ENCODE measurements at regions of chr4 and their contacts with region 1.

Region 1: DNA sequence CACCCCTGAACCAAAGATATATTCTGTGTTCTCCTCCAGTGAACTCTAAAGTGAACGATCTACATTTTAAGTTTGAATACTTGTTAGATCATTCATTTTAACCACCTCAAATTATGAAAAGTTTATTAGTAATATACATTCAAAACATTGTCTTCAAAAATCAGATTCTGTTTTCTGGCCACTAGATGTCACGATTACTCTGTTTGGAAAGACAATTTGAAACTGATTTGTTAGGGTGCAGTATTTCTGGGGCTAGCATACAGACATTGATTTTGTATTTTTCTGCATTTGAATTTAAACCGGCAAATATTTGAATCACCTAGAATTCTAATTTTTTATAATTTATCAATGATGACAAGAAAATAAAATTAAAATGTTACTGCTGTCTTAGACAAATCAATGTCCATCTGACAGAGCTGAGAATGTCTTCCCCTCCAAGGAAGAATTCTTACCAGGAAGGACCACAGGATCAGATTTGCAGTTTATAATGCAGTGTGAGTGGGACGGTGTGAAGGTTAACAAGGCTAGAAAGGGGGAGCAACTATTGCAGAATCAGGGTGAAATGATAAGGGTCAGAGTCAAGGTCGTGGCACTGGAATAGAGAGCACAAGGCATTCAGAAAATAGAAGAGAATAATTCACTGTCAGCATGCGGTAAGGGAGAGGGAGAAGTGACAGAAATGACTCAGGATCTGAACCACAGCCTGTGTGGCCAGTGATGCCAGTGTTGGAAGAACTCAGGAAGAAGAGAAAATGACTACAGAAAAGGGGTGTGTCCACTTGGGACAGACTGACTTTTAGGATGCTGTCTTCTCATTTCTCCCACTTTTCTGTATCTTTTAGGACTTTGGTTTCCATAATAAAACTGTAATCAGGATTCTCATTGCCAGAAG is 91.6 kb downstream of the ANXA10 start:
- DNase-seq: peak in 2 of 9 experiments; percentile 24 to 36
- ATAC-seq: no peak
- H3K4me3 ChIP-seq: no peak overlapping the region
- H3K4me3 Mint-ChIP-seq: no peak overlapping the region
- H3K27ac ChIP-seq: no peak overlapping the region
- H3K27ac Mint-ChIP-seq: no peak overlapping the region
- H3K4me1 ChIP-seq: no peaks in the 10 kb centered on the region
- H3K4me1 Mint-ChIP-seq: no peaks in the 10 kb centered on the region
- H3K27me3 ChIP-seq: no peaks in the 10 kb centered on the region
- H3K27me3 Mint-ChIP-seq: no peaks in the 10 kb centered on the region
- CTCF ChIP-seq: peak; percentile 49

Region 2: GRCh38 chr4:167883266-167883665 is 300.7 kb before region 1 on chr4:
- CTCF ChIA-PET with region 1: no interaction called
- POLR2A ChIA-PET with region 1: no interaction called
- intact Hi-C with region 1: no loop called
- DNase-seq: no peak
- ATAC-seq: no peak
- H3K4me3 ChIP-seq: no peak overlapping the region
- H3K4me3 Mint-ChIP-seq: no peak overlapping the region
- H3K27ac ChIP-seq: no peak overlapping the region
- H3K27ac Mint-ChIP-seq: no peak overlapping the region
- H3K4me1 ChIP-seq: no peaks in the 10 kb centered on the region
- H3K4me1 Mint-ChIP-seq: no peaks in the 10 kb centered on the region
- H3K27me3 ChIP-seq: no peaks in the 10 kb centered on the region
- H3K27me3 Mint-ChIP-seq: no peaks in the 10 kb centered on the region
- CTCF ChIP-seq: no peak

Region 3: DNA sequence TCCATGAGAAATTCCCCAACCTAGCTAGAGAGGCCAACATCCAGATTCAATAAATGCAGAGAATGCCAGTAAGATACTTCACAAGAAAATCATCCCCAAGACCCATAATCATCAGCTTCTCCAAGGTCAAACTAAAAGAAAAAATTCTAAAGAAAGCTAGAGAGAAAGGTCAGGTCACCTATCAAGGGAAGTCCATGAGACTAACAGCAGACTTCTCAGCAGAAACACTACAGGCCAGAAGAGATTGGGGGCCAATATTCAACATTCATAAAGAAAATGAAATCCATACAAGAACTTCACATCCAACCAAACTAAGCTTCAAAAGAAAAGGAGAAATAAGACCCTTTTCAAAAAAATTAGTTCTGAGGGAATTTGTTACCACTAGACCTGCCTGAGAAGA is 210.4 kb before region 1 on chr4:
- CTCF ChIA-PET with region 1: no interaction called
- POLR2A ChIA-PET with region 1: no interaction called
- intact Hi-C with region 1: no loop called
- DNase-seq: no peak
- ATAC-seq: no peak
- H3K4me3 ChIP-seq: no peak overlapping the region
- H3K4me3 Mint-ChIP-seq: no peak overlapping the region
- H3K27ac ChIP-seq: no peak overlapping the region
- H3K27ac Mint-ChIP-seq: no peak overlapping the region
- H3K4me1 ChIP-seq: no peaks in the 10 kb centered on the region
- H3K4me1 Mint-ChIP-seq: no peaks in the 10 kb centered on the region
- H3K27me3 ChIP-seq: no peaks in the 10 kb centered on the region
- H3K27me3 Mint-ChIP-seq: no peaks in the 10 kb centered on the region
- CTCF ChIP-seq: no peak

Region 4: DNA sequence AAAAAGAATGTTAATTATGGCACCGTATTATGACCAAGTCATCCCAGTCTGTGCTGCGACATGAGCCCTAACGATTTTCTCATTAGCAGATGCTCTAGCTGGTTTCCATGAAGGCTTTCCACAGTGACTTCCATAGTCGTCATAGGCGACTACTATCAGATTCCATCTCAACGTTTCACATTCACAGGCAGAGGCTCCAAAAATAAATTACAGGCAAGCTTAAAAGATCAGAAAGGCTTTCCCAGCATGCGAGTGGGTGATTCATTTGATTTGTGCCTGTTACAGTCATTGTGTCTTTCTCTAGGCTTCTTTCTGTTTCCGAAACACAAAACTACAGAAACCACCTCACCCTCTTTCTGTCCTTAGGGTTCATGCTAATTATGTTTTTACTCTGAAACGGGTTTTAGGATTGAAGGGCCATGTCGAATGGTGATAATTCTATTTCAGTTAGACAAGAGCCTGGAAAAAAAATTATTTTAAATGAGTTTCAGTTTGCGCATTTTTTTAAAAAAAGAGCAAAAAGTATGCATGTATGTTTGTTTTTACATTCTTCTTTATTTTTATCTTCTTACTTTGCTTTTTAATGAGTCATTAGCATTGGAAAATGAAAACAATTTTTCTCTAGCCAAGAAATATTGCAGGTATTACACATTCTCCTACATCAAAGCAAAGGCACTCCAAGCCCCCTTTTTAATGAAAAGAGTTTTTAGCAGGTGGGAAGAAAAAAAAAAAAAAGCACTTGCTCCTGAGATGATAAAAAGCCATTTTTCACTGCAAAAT is 356.3 kb after region 1 on chr4:
- CTCF ChIA-PET with region 1: no interaction called
- POLR2A ChIA-PET with region 1: no interaction called
- intact Hi-C with region 1: no loop called
- DNase-seq: no peak
- ATAC-seq: no peak
- H3K4me3 ChIP-seq: no peak overlapping the region
- H3K4me3 Mint-ChIP-seq: no peak overlapping the region
- H3K27ac ChIP-seq: no peak overlapping the region
- H3K27ac Mint-ChIP-seq: no peak overlapping the region
- H3K4me1 ChIP-seq: no peaks in the 10 kb centered on the region
- H3K4me1 Mint-ChIP-seq: no peaks in the 10 kb centered on the region
- H3K27me3 ChIP-seq: no peaks in the 10 kb centered on the region
- H3K27me3 Mint-ChIP-seq: peaks cover 4% of the 10 kb centered on the region
- CTCF ChIP-seq: no peak

Region 5: DNA sequence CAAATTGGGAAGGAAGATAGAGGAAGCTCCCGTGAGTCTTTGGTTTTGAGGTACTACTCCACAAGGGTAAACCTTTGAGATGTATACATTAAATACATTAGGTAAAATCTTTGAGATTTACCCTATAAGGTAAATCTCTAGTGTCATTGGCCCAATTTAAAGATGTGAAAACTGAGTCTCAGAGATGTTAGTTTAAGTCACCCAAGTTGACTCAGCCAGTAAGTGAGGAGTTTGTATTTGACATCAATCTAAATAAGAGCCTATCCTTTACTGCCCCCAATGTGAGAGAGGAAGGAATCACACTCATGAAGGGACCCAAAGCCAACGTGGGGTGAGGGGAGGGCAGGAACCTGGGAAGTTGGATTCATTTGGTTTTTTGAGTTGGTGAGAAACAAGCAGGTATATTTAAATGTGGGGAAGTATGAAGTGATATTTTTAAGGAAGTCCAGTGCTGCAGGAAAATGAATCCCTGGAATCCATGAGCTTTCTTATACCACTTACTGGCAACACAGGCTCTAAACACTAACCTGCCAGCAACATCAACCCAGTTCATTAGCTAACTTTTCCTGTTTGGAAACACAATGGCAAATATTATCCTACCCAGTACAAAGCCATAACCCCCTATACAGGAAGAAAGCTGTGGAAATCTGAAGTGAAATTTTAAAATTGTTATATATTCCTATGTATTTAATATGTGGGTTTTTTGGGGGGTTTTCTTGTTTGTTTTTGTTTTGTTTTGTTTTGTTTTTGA is 368.2 kb after region 1 on chr4:
- CTCF ChIA-PET with region 1: no interaction called
- POLR2A ChIA-PET with region 1: no interaction called
- intact Hi-C with region 1: loop called in 1 of 2 experiments (anchors 10 kb)
- DNase-seq: peak in 2 of 9 experiments; percentile 24 to 50
- ATAC-seq: peak; percentile 67
- H3K4me3 ChIP-seq: no peak overlapping the region
- H3K4me3 Mint-ChIP-seq: no peak overlapping the region
- H3K27ac ChIP-seq: no peak overlapping the region
- H3K27ac Mint-ChIP-seq: no peak overlapping the region
- H3K4me1 ChIP-seq: no peaks in the 10 kb centered on the region
- H3K4me1 Mint-ChIP-seq: no peaks in the 10 kb centered on the region
- H3K27me3 ChIP-seq: no peaks in the 10 kb centered on the region
- H3K27me3 Mint-ChIP-seq: no peaks in the 10 kb centered on the region
- CTCF ChIP-seq: peak; percentile 30

Region 6: DNA sequence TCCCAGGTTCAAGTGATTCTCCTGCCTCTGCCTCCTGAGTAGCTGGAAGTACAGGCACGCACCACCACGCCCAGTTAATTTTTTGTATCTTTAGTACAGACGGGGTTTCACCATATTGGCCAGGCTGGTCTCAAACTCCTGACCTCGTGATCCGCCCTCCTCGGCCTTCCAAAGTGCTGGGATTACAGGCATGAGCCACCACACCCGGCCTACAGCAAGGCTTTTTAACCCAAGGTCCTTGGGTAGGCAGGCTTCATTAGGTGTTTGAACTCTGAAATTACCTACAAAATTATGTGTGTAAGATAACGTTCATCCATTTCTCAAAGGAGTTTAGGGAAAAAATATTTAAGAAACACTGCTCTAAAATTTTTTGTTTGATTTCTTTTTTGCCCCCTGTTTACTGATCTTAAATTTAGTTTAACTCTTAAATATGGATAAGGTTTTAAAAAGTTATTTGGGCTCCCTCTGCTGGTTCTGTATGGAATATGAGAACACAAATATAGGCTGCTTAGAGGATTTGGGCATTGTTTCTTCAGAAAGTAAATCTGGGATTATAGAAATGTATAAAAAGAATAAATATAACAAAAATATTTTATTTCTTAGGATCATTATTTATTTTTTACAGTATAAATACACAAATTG is 733.3 kb after region 1 on chr4:
- CTCF ChIA-PET with region 1: no interaction called
- POLR2A ChIA-PET with region 1: no interaction called
- intact Hi-C with region 1: loop called in 1 of 2 experiments (anchors 1 kb)
- DNase-seq: peak in 2 of 9 experiments; percentile 23 to 35
- ATAC-seq: no peak
- H3K4me3 ChIP-seq: no peak overlapping the region
- H3K4me3 Mint-ChIP-seq: no peak overlapping the region
- H3K27ac ChIP-seq: no peak overlapping the region
- H3K27ac Mint-ChIP-seq: no peak overlapping the region
- H3K4me1 ChIP-seq: no peaks in the 10 kb centered on the region
- H3K4me1 Mint-ChIP-seq: no peaks in the 10 kb centered on the region
- H3K27me3 ChIP-seq: no peaks in the 10 kb centered on the region
- H3K27me3 Mint-ChIP-seq: no peaks in the 10 kb centered on the region
- CTCF ChIP-seq: peak; percentile 25

Region 7: DNA sequence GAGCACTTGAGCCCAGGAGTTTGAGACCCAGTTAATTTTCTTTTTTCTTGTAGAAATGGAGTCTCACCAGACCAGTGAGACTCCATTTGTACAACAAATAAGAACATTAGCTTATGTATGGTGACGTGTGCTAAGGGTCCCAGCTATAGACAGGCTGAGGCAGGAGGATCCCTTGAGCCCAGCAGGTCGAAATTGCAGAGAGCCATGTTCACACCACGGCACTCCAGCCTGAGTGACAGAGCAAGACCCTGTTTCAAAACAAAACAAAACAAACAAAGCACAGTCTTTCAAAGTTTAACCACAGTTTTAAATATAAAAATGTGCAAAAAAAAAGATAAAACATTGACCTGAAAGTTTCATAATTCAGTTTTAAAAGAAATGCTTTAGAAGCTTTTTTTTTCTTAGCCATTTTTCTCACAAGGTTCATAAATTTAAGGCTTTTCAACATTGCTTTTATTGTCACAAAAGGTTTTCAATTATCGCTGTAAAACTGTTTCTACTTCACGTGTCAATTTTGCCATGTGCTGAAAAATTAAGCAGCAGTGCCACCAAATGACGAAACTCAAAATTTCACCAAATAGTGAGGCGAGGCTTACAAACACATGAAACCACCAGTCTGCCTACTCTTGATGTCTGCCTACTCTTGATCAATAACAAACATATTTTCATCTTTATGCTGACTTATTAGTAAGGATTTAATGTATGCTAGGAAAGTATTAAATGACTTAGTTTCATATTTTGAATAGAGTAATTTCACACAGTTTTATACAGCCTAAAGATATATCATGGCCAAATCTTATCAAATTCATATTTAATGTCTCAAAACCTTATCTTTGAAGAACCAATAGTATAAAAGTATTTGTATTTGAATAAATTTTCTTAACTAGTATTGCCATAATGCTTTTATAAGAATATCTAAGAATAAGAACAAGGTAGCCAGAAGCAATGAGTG is 1302.1 kb after region 1 on chr4:
- CTCF ChIA-PET with region 1: no interaction called
- POLR2A ChIA-PET with region 1: no interaction called
- intact Hi-C with region 1: loop called in 1 of 2 experiments (anchors 5 kb)
- DNase-seq: peak in 5 of 9 experiments; percentile 2 to 57 (median 18)
- ATAC-seq: no peak
- H3K4me3 ChIP-seq: no peak overlapping the region
- H3K4me3 Mint-ChIP-seq: no peak overlapping the region
- H3K27ac ChIP-seq: no peak overlapping the region
- H3K27ac Mint-ChIP-seq: no peak overlapping the region
- H3K4me1 ChIP-seq: no peaks in the 10 kb centered on the region
- H3K4me1 Mint-ChIP-seq: peaks cover 3% of the 10 kb centered on the region
- H3K27me3 ChIP-seq: no peaks in the 10 kb centered on the region
- H3K27me3 Mint-ChIP-seq: no peaks in the 10 kb centered on the region
- CTCF ChIP-seq: peak; percentile 60

Region 8: GRCh38 chr4:169566021-169566818 is 1382.3 kb after region 1 on chr4:
- CTCF ChIA-PET with region 1: no interaction called
- POLR2A ChIA-PET with region 1: no interaction called
- intact Hi-C with region 1: loop called in 1 of 2 experiments (anchors 2 kb)
- DNase-seq: peak in 4 of 9 experiments; percentile 36 to 63 (median 46)
- ATAC-seq: peak; percentile 52
- H3K4me3 ChIP-seq: no peak overlapping the region
- H3K4me3 Mint-ChIP-seq: no peak overlapping the region
- H3K27ac ChIP-seq: no peak overlapping the region
- H3K27ac Mint-ChIP-seq: no peak overlapping the region
- H3K4me1 ChIP-seq: no peaks in the 10 kb centered on the region
- H3K4me1 Mint-ChIP-seq: peaks cover 3% of the 10 kb centered on the region
- H3K27me3 ChIP-seq: no peaks in the 10 kb centered on the region
- H3K27me3 Mint-ChIP-seq: no peaks in the 10 kb centered on the region
- CTCF ChIP-seq: peak; percentile 56

Region 9: GRCh38 chr4:169723207-169723965 is 1539.4 kb after region 1 on chr4:
- CTCF ChIA-PET with region 1: no interaction called
- POLR2A ChIA-PET with region 1: no interaction called
- intact Hi-C with region 1: no loop called
- DNase-seq: peak in 4 of 9 experiments; percentile 7 to 43 (median 28)
- ATAC-seq: no peak
- H3K4me3 ChIP-seq: no peak overlapping the region
- H3K4me3 Mint-ChIP-seq: no peak overlapping the region
- H3K27ac ChIP-seq: no peak overlapping the region
- H3K27ac Mint-ChIP-seq: peak overlapping the region; percentile 52
- H3K4me1 ChIP-seq: no peaks in the 10 kb centered on the region
- H3K4me1 Mint-ChIP-seq: peaks cover 2% of the 10 kb centered on the region
- H3K27me3 ChIP-seq: no peaks in the 10 kb centered on the region
- H3K27me3 Mint-ChIP-seq: no peaks in the 10 kb centered on the region
- CTCF ChIP-seq: peak; percentile 16

Measured in CD8-positive, alpha-beta T cell (primary cell).